ENCODE measurements at regions of chr3 and their contacts with region 1.

Region 1: DNA sequence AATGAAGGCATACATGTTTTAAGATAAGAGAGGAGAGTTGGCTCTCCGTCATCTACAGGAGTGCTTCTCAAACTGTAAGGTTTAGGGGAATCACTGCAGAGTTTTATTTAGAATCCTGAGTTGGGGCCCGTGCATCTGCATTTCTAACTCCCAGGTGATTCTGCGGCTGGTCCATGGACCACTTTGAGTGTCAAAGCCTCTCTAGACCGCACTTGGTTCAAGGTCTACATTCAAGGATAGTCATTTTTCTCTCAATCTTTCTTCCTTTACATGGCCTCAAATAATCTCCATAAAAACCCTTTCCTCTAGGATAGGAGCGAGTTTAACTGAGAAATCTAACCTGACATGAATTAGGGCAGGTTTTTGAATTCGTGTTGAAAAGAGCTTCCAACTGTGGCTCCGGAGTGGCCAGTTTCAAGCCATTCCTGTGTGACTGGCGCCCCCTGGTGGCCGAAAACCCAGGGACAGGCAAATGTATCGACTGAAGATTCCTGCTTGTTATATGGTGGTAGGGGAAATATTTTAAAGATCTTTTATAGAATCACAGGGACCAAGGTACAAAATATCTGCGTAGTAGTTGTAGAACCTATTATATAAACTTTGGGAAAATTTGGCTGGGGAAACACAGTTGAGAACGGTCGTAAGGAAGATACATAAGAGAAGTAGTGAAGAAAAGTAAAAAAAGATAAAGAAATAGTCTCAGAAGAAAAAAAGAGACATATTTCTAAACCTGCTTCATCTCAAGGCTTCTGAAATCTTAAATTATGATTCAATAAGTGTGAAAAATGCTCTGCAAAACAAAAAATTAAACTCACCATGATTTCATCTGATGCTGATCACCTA is 11.9 kb downstream of the GABRR3 start:
- DNase-seq: peak; percentile 77 to 84 (median 81)
- H3K4me3 ChIP-seq: no peak overlapping the region
- H3K4me3 Mint-ChIP-seq: no peak overlapping the region
- H3K27ac ChIP-seq: no peak overlapping the region
- H3K27ac Mint-ChIP-seq: peak overlapping the region in 6 of 7 donors; percentile 6 to 72 (median 36)
- H3K4me1 ChIP-seq: peaks cover 1% of the 10 kb centered on the region
- H3K4me1 Mint-ChIP-seq: peaks cover under 1 to 5% (median 5%) of the 10 kb centered on the region in 4 donors
- H3K27me3 ChIP-seq: no peaks in the 10 kb centered on the region
- H3K27me3 Mint-ChIP-seq: no peaks in the 10 kb centered on the region

Region 2: GRCh38 chr3:97719156-97719821 is 303.9 kb before region 1 on chr3:
- CTCF ChIA-PET with region 1: interaction called, 12 read pairs
- POLR2A ChIA-PET with region 1: no interaction called
- intact Hi-C with region 1: loop called (anchors 2 kb)
- DNase-seq: peak; percentile 49 to 61 (median 52)
- H3K4me3 ChIP-seq: no peak overlapping the region
- H3K4me3 Mint-ChIP-seq: peak overlapping the region in 4 of 8 donors; percentile 8 to 70 (median 34)
- H3K27ac ChIP-seq: no peak overlapping the region
- H3K27ac Mint-ChIP-seq: no peak overlapping the region
- H3K4me1 ChIP-seq: no peaks in the 10 kb centered on the region
- H3K4me1 Mint-ChIP-seq: no peaks in the 10 kb centered on the region
- H3K27me3 ChIP-seq: no peaks in the 10 kb centered on the region
- H3K27me3 Mint-ChIP-seq: peaks cover 1 to 7% of the 10 kb centered on the region in 2 donors

Region 3: GRCh38 chr3:97821810-97822775 is 201.1 kb before region 1 on chr3 and contains the start of gene CRYBG3:
- CTCF ChIA-PET with region 1: interaction called, 24 read pairs
- POLR2A ChIA-PET with region 1: interaction called, 5 read pairs
- intact Hi-C with region 1: loop called (anchors 1 kb)
- DNase-seq: peak; percentile 78 to 86 (median 85)
- H3K4me3 ChIP-seq: peak within 1 kb of the TSS; percentile 55 to 76
- H3K4me3 Mint-ChIP-seq: peak within 1 kb of the TSS; percentile 96 to 99 (median 98)
- H3K27ac ChIP-seq: peak within 1 kb of the TSS; percentile 48
- H3K27ac Mint-ChIP-seq: peak within 1 kb of the TSS; percentile 87 to 97 (median 94)
- H3K4me1 ChIP-seq: peaks cover 21% of the 10 kb centered on the region
- H3K4me1 Mint-ChIP-seq: peaks cover 24 to 38% (median 27%) of the 10 kb centered on the region in 4 donors
- H3K27me3 ChIP-seq: no peaks in the 10 kb centered on the region
- H3K27me3 Mint-ChIP-seq: peaks cover 0 to 2% of the 10 kb centered on the region in 2 donors
- total RNA-seq, gene CRYBG3: 11.6 to 12.3 TPM

Region 4: DNA sequence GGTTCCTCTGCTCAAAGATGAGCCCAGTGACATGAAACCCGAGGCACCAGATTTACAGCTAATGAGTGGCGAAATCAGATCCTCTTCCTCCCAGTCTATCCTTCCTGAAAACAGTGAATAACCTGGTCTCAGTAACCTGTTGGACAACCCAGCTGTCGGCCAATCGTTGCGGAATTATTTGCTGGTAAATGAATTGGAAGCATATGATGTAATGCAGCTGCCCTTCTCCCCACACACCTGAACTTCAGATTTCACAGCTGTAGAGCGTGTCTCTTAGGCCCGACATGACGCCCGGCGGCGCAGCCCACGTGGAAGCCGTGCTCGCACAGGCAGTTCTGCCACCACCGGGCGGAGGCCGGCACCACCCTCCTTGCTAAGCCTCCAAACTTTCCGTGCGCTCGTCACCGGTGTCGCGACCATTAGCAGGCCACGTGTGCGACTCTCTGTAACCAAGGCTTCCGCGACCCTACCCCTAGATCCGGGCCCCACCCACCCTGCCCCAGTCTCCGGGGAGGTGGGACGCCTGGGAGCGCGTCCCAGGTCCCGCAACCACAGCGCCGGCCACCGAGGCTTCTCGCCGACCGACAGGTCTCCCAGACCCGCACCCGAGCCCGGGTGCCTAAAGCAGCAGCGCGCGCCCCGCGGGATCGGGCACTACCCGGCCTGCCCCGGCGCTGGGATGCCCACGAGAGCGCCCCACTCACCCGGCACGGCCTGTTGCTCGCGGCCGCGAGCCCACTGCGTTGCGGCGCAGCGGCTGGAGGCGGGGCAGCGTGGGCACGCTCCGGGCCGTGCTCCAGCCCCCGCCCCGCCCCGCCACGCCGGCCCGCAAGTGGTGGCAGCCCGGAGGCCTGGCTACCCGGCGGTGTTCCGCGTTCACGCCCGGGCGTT is 51.3 kb before region 1 on chr3 and contains the start of gene RIOX2:
- CTCF ChIA-PET with region 1: interaction called, 4 read pairs
- POLR2A ChIA-PET with region 1: interaction called, 3 read pairs
- intact Hi-C with region 1: loop called (anchors 1 kb)
- DNase-seq: peak; percentile 74 to 84 (median 80)
- H3K4me3 ChIP-seq: peak within 1 kb of the TSS in 1 of 2 donors; percentile 54
- H3K4me3 Mint-ChIP-seq: peak within 1 kb of the TSS; percentile 88 to 96 (median 94)
- H3K27ac ChIP-seq: peak within 1 kb of the TSS; percentile 41
- H3K27ac Mint-ChIP-seq: peak within 1 kb of the TSS; percentile 91 to 96 (median 95)
- H3K4me1 ChIP-seq: peaks cover 46% of the 10 kb centered on the region
- H3K4me1 Mint-ChIP-seq: peaks cover 39 to 70% (median 55%) of the 10 kb centered on the region in 4 donors
- H3K27me3 ChIP-seq: no peaks in the 10 kb centered on the region
- H3K27me3 Mint-ChIP-seq: no peaks in the 10 kb centered on the region
- total RNA-seq, gene RIOX2: 32.2 to 35.5 TPM

Region 5: GRCh38 chr3:98056035-98056434 is 32.8 kb after region 1 on chr3:
- CTCF ChIA-PET with region 1: no interaction called
- POLR2A ChIA-PET with region 1: no interaction called
- intact Hi-C with region 1: no loop called
- DNase-seq: no peak
- H3K4me3 ChIP-seq: no peak overlapping the region
- H3K4me3 Mint-ChIP-seq: no peak overlapping the region
- H3K27ac ChIP-seq: no peak overlapping the region
- H3K27ac Mint-ChIP-seq: no peak overlapping the region
- H3K4me1 ChIP-seq: no peaks in the 10 kb centered on the region
- H3K4me1 Mint-ChIP-seq: no peaks in the 10 kb centered on the region
- H3K27me3 ChIP-seq: no peaks in the 10 kb centered on the region
- H3K27me3 Mint-ChIP-seq: peaks cover 6 to 13% of the 10 kb centered on the region in 2 donors